CD4-positive, alpha-beta memory T cell (primary cell): ENCODE measurements at regions of chr9 and their contacts with region 1.

Region 1: GRCh38 chr9:35696525-35697215 is 6.9 kb upstream of the TPM2 start:
- DNase-seq: peak in 4 of 5 donors; percentile 42 to 61 (median 52)
- H3K4me3 ChIP-seq: no peak overlapping the region
- H3K4me3 Mint-ChIP-seq: no peak overlapping the region
- H3K27ac ChIP-seq: no peak overlapping the region
- H3K27ac Mint-ChIP-seq: peak overlapping the region; percentile 35 to 89 (median 79)
- H3K4me1 ChIP-seq: peaks cover 9% of the 10 kb centered on the region
- H3K4me1 Mint-ChIP-seq: peaks cover 7 to 15% (median 12%) of the 10 kb centered on the region in 4 donors
- H3K27me3 ChIP-seq: no peaks in the 10 kb centered on the region
- H3K27me3 Mint-ChIP-seq: no peaks in the 10 kb centered on the region

Region 2: GRCh38 chr9:35616681-35617459 is 79.8 kb before region 1 on chr9:
- CTCF ChIA-PET with region 1: interaction called, 85 read pairs
- POLR2A ChIA-PET with region 1: interaction called, 11 read pairs
- intact Hi-C with region 1: loop called (anchors 2 kb)
- DNase-seq: peak; percentile 63 to 75 (median 64)
- H3K4me3 ChIP-seq: peak overlapping the region; percentile 63 to 64
- H3K4me3 Mint-ChIP-seq: peak overlapping the region; percentile 84 to 91 (median 88)
- H3K27ac ChIP-seq: peak overlapping the region; percentile 60
- H3K27ac Mint-ChIP-seq: peak overlapping the region; percentile 89 to 95 (median 93)
- H3K4me1 ChIP-seq: peaks cover 36% of the 10 kb centered on the region
- H3K4me1 Mint-ChIP-seq: peaks cover 26 to 58% (median 35%) of the 10 kb centered on the region in 4 donors
- H3K27me3 ChIP-seq: no peaks in the 10 kb centered on the region
- H3K27me3 Mint-ChIP-seq: no peaks in the 10 kb centered on the region

Region 3: GRCh38 chr9:35657546-35658136 is 39.0 kb before region 1 on chr9 and contains the start of gene RMRP:
- CTCF ChIA-PET with region 1: interaction called, 339 read pairs
- POLR2A ChIA-PET with region 1: interaction called, 160 read pairs
- intact Hi-C with region 1: loop called (anchors 1 kb)
- DNase-seq: peak; percentile 91 to 96 (median 93)
- H3K4me3 ChIP-seq: peak within 1 kb of the TSS; percentile 67 to 90
- H3K4me3 Mint-ChIP-seq: peak within 1 kb of the TSS; percentile 86 to 95 (median 92)
- H3K27ac ChIP-seq: peak within 1 kb of the TSS; percentile 96
- H3K27ac Mint-ChIP-seq: peak within 1 kb of the TSS; percentile 95 to 100 (median 99)
- H3K4me1 ChIP-seq: peaks cover 64% of the 10 kb centered on the region
- H3K4me1 Mint-ChIP-seq: peaks cover 52 to 78% (median 64%) of the 10 kb centered on the region in 4 donors
- H3K27me3 ChIP-seq: no peaks in the 10 kb centered on the region
- H3K27me3 Mint-ChIP-seq: peaks cover 2 to 4% of the 10 kb centered on the region in 2 donors
- total RNA-seq, gene RMRP: 18,678 to 21,585 TPM

Region 4: DNA sequence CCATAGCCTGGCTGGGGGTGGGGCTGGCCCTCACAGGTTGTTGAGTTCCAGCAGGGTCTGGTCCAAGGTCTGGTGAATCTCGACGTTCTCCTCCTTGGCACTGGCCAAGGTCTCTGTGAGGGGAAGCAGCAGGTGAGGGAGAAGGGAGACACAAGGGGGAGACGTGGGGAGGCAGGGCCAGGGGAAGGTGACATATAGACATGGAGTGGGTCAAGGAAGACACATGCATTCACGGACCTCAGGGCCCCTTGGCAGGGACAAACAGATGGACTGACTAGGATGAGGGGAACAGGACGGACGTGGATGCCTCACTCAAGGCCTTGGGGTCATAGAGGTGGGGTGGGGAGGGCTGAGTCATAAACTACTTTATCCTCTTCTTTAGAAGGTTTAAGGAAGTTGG is 14.6 kb before region 1 on chr9:
- CTCF ChIA-PET with region 1: interaction called, 35 read pairs
- POLR2A ChIA-PET with region 1: interaction called, 13 read pairs
- intact Hi-C with region 1: no loop called
- DNase-seq: no peak
- H3K4me3 ChIP-seq: no peak overlapping the region
- H3K4me3 Mint-ChIP-seq: no peak overlapping the region
- H3K27ac ChIP-seq: no peak overlapping the region
- H3K27ac Mint-ChIP-seq: peak overlapping the region in 1 of 7 donors; percentile 7
- H3K4me1 ChIP-seq: no peaks in the 10 kb centered on the region
- H3K4me1 Mint-ChIP-seq: peaks cover 0 to 6% (median under 1%) of the 10 kb centered on the region in 4 donors
- H3K27me3 ChIP-seq: no peaks in the 10 kb centered on the region
- H3K27me3 Mint-ChIP-seq: no peaks in the 10 kb centered on the region

Region 5: DNA sequence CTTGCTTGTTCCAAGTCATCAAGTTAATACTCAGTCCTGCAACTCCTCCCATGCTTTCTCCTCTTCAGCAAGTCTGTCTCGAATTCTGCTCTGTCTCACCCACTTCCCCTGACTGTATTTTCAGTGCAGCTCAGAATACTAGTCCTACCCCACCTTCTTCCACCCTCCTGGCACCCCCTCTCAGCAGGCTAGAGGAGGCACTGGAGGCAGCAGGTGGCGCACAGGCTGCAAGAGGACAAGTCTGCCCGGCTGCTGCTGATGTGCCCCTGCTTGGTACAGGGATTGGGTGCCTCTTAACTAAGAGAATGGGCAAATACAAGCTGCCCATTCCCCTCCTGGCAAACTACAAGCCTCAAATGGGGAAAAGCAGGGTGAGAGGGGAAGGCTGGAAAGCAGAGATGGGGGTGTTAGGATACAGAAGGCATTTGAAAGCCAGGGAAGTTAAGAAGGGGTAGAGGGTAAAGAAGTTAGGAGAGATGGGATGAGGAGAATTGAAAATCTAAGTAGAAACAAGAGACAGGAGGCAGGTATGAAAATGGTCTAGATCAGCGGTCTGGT is 30.3 kb after region 1 on chr9:
- CTCF ChIA-PET with region 1: interaction called, 118 read pairs
- POLR2A ChIA-PET with region 1: interaction called, 33 read pairs
- intact Hi-C with region 1: loop called (anchors 2 kb)
- DNase-seq: peak in 3 of 5 donors; percentile 15 to 53 (median 16)
- H3K4me3 ChIP-seq: no peak overlapping the region
- H3K4me3 Mint-ChIP-seq: peak overlapping the region in 5 of 8 donors; percentile 47 to 74 (median 67)
- H3K27ac ChIP-seq: peak overlapping the region; percentile 33
- H3K27ac Mint-ChIP-seq: peak overlapping the region in 5 of 7 donors; percentile 84 to 89 (median 88)
- H3K4me1 ChIP-seq: peaks cover 52% of the 10 kb centered on the region
- H3K4me1 Mint-ChIP-seq: peaks cover 0 to 20% (median 13%) of the 10 kb centered on the region in 4 donors
- H3K27me3 ChIP-seq: no peaks in the 10 kb centered on the region
- H3K27me3 Mint-ChIP-seq: no peaks in the 10 kb centered on the region